Activated CD4-positive, alpha-beta memory T cell treated with anti-CD3 and anti-CD28 coated beads for 36 hours (primary cell): ENCODE measurements at regions of chr5 and their contacts with region 1.

Region 1: DNA sequence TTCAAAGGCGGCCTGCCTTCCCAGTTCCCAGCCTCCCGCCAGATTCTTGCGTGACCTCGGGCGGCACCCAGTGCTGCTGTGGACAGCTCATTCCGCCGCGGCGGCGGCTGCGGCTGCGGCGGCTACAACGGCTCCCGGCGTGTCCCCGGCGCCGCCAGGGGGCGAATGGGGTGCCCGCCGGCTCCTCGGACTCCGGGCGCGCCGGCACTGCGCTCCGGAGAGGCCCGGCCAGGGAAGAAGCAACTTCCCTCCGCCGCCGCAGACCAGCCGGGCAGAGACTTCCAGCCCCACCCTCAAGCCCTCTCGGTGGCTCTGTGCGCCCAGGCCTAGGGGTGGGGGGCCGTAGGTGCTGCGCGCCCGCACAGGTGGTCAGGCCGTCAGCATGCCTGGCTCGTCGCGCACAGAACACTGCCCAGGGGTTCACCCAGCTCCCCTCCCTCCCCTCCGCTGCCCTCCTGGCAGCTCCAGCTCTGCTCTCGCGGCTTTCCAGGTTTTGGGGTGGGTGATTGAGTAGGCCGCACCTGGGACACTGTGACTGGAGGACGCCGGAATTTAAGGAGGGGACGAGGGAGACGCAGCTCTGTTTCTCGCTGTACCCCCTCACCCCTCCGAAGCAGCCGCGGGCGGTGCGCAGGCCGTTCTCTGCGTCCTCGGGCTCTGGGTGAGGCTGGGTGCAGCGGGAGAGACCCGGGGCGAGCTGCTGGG is 20.2 kb downstream of the IGIP start:
- DNase-seq: peak; percentile 74
- H3K4me3 Mint-ChIP-seq: peak overlapping the region; percentile 24
- H3K27ac Mint-ChIP-seq: no peak overlapping the region
- H3K4me1 Mint-ChIP-seq: peaks cover 26% of the 10 kb centered on the region
- H3K27me3 Mint-ChIP-seq: peaks cover 10% of the 10 kb centered on the region

Region 2: GRCh38 chr5:140081030-140081429 is 64.9 kb before region 1 on chr5:
- CTCF ChIA-PET with region 1: interaction called, 126 read pairs
- POLR2A ChIA-PET with region 1: no interaction called
- intact Hi-C with region 1: no loop called
- DNase-seq: no peak
- H3K4me3 Mint-ChIP-seq: no peak overlapping the region
- H3K27ac Mint-ChIP-seq: no peak overlapping the region
- H3K4me1 Mint-ChIP-seq: no peaks in the 10 kb centered on the region
- H3K27me3 Mint-ChIP-seq: peaks cover 8% of the 10 kb centered on the region

Region 3: DNA sequence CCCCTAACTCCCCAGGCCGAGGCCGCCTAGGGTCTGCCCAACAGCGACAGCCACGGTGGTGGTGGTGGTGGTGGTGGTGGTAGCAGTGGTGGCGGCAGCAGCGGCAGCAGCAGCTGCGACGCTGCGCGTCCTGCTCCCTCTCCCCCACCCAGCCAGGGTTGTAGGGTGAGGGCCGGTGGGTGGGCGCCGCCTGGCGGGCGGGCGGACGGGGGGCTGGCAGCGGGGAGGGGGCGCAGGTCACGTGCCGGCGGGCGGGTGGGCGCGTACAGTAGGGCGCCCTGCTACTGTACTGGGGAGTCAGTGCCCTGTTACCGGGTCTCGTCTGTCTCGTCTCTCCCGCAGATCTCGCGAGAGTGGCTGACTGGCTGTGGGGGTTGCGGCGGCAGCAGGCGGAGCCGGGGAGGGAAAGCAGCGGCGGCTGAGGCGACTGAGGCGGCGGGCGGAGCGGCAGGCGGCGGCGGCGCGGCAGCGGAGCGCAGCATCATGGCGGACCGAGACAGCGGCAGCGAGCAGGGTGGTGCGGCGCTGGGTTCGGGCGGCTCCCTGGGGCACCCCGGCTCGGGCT is 32.2 kb before region 1 on chr5 and contains the start of gene PURA:
- CTCF ChIA-PET with region 1: interaction called, 112 read pairs
- POLR2A ChIA-PET with region 1: interaction called, 5 read pairs
- intact Hi-C with region 1: loop called (anchors 1 kb)
- DNase-seq: peak; percentile 97
- H3K4me3 Mint-ChIP-seq: peak within 1 kb of the TSS; percentile 83
- H3K27ac Mint-ChIP-seq: peak within 1 kb of the TSS; percentile 89
- H3K4me1 Mint-ChIP-seq: peaks cover 68% of the 10 kb centered on the region
- H3K27me3 Mint-ChIP-seq: no peaks in the 10 kb centered on the region
- total RNA-seq, gene PURA: 12.0 to 12.3 TPM

Region 4: GRCh38 chr5:140131967-140132409 is 14.0 kb before region 1 on chr5:
- CTCF ChIA-PET with region 1: interaction called, 66 read pairs
- POLR2A ChIA-PET with region 1: interaction called, 3 read pairs
- intact Hi-C with region 1: no loop called
- DNase-seq: peak; percentile 38
- H3K4me3 Mint-ChIP-seq: no peak overlapping the region
- H3K27ac Mint-ChIP-seq: no peak overlapping the region
- H3K4me1 Mint-ChIP-seq: peaks cover 35% of the 10 kb centered on the region
- H3K27me3 Mint-ChIP-seq: no peaks in the 10 kb centered on the region

Region 5: GRCh38 chr5:140169410-140169809 is 23.4 kb after region 1 on chr5:
- CTCF ChIA-PET with region 1: interaction called, 12 read pairs
- POLR2A ChIA-PET with region 1: no interaction called
- intact Hi-C with region 1: no loop called
- DNase-seq: no peak
- H3K4me3 Mint-ChIP-seq: no peak overlapping the region
- H3K27ac Mint-ChIP-seq: no peak overlapping the region
- H3K4me1 Mint-ChIP-seq: peaks cover 5% of the 10 kb centered on the region
- H3K27me3 Mint-ChIP-seq: no peaks in the 10 kb centered on the region